Transverse colon (tissue), 4 donors: ENCODE measurements at regions of chr2 and their contacts with region 1.

Region 1: DNA sequence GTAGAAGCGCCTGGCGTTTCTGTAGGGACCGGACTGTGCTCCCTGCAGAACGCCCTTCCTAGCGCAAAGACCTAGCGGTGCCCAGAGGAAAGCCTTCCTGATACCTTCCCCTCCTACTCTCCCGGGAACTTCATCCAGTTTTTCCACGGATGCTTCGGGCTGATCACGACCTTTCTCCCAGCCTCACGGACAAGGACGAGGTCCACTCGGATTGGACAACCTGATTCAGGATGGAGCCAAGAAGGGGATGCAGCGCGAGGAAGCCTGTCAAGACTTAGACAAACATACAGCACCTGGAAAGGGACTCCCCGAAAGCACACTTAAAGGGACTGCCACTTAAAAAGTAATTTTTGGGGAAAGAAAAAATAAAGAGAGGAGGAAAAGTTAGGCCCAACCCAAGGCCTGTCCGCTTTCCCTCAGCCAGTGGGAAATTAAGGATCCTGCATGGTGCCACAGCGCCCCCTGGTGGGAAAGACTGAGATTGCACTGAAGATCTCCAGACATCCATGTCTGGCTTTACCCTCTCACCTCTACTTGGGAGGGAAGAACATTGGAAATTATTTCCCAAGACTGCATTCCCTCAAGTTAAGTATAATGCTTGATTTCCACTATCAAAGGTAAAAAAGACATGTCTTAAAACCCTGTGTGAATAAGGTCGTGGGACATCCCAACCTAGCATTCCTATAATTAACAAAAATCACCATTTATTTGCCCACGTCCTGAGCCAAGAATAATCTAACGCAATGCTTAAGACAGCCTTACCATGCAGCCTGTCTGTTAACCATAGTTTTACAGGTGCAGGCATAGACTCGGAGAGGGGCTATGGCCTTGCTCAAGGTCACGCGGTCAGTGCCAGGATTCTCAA is 13.4 kb upstream of the COPS8 start:
- DNase-seq: peak; percentile 79
- H3K4me3 ChIP-seq: no peak overlapping the region
- H3K27ac ChIP-seq: no peak overlapping the region
- H3K4me1 ChIP-seq: no peaks in the 10 kb centered on the region
- H3K27me3 ChIP-seq: no peaks in the 10 kb centered on the region
- CTCF ChIP-seq: peak; percentile 92 to 100 (median 98)
- EP300 ChIP-seq: no peak
- POLR2A ChIP-seq: no peak

Region 2: GRCh38 chr2:235766278-235766677 is 1306.0 kb before region 1 on chr2:
- in situ Hi-C with region 1: loop called in 2 of 4 experiments (anchors 25 kb)
- intact Hi-C with region 1: no loop called
- DNase-seq: peak; percentile 73
- H3K4me3 ChIP-seq: no peak overlapping the region
- H3K27ac ChIP-seq: peak overlapping the region in 1 of 4 donors; percentile 4
- H3K4me1 ChIP-seq: peaks cover 0 to 8% (median 0%) of the 10 kb centered on the region in 4 donors
- H3K27me3 ChIP-seq: no peaks in the 10 kb centered on the region
- CTCF ChIP-seq: peak; percentile 87 to 95 (median 91)
- EP300 ChIP-seq: no peak
- POLR2A ChIP-seq: no peak

Region 3: GRCh38 chr2:236345081-236345714 is 727.1 kb before region 1 on chr2:
- in situ Hi-C with region 1: loop called in 2 of 4 experiments (anchors 5 kb)
- intact Hi-C with region 1: no loop called
- DNase-seq: no peak
- H3K4me3 ChIP-seq: no peak overlapping the region
- H3K27ac ChIP-seq: no peak overlapping the region
- H3K4me1 ChIP-seq: no peaks in the 10 kb centered on the region
- H3K27me3 ChIP-seq: no peaks in the 10 kb centered on the region
- CTCF ChIP-seq: no peak
- EP300 ChIP-seq: no peak
- POLR2A ChIP-seq: no peak

Region 4: DNA sequence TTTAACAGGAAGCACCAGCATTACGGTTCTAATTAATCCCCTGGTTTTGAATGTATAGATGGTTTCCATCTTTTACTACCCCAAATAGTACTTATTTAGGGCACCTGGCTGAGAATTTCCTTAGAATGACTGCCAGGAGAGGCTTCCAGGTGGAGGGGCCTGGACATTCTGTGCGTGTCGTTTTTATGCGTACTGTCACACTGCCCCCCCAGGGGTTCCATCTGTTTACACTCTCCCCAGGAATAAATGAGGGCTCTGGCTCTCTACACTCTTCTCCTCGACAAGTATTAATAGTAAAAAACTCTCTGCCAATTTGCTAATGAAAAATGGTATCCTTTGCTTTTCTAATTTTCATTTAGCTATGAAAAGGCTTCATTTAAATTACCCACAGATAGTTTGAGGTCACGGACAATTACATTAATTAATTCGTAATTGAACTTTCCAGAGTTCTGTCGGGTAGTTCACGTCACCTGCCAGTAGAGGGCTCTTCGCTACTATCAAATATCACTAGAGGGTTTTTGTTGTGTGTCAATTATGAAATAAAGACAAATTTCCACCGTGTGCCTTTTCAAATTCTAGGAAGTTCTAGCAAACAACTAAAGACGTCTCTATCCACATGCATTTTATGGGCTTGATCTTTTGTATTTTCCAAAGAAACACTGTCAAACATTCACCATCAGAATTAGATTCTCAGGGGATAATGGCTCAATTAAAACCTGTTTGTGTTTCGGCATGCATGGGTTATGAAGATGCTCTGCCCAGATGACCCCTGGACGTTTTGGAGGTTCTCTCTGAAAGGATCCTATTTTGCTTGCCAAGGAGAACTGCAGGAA is 719.3 kb before region 1 on chr2:
- in situ Hi-C with region 1: loop called in 2 of 4 experiments (anchors 5 kb)
- intact Hi-C with region 1: no loop called
- DNase-seq: no peak
- H3K4me3 ChIP-seq: no peak overlapping the region
- H3K27ac ChIP-seq: no peak overlapping the region
- H3K4me1 ChIP-seq: no peaks in the 10 kb centered on the region
- H3K27me3 ChIP-seq: no peaks in the 10 kb centered on the region
- CTCF ChIP-seq: peak; percentile 69 to 92 (median 81)
- EP300 ChIP-seq: no peak
- POLR2A ChIP-seq: no peak

Region 5: GRCh38 chr2:236369661-236370062 is 702.6 kb before region 1 on chr2:
- in situ Hi-C with region 1: loop called in 1 of 4 experiments (anchors 10 kb)
- intact Hi-C with region 1: no loop called
- DNase-seq: no peak
- H3K4me3 ChIP-seq: no peak overlapping the region
- H3K27ac ChIP-seq: no peak overlapping the region
- H3K4me1 ChIP-seq: peaks cover 0 to 2% (median 0%) of the 10 kb centered on the region in 4 donors
- H3K27me3 ChIP-seq: peaks cover 13% of the 10 kb centered on the region
- CTCF ChIP-seq: no peak
- EP300 ChIP-seq: no peak
- POLR2A ChIP-seq: no peak

Region 6: DNA sequence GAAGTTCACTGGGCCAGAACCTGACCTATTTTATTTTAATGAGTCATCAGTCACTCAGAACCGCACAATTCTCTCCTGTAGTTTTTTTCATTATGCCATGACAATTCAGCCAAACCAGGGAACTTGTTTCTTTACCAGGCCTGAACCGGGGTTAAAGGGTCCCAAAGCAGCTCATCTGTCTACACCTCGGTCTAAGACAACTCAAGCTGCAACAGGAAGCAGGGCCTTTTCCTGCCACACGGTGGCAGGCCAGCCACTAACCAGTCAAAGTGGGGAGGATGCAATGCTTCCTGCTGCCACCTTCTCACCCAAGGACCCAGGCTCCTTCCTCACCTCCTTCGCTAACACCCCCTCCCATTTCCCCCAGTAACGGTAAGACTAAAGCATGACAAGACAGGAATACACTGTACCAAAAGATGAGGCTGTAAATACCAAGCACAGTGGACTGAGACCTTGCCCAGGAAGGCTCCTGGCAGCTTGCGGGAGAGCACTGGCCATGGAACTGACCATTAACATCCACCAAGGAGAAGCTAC is 559.3 kb before region 1 on chr2:
- in situ Hi-C with region 1: loop called in 2 of 4 experiments (anchors 25 kb)
- intact Hi-C with region 1: no loop called
- DNase-seq: peak; percentile 58
- H3K4me3 ChIP-seq: no peak overlapping the region
- H3K27ac ChIP-seq: no peak overlapping the region
- H3K4me1 ChIP-seq: peaks cover 0 to 12% (median 0%) of the 10 kb centered on the region in 4 donors
- H3K27me3 ChIP-seq: peaks cover 7% of the 10 kb centered on the region
- CTCF ChIP-seq: peak; percentile 77 to 86 (median 80)
- EP300 ChIP-seq: no peak
- POLR2A ChIP-seq: no peak

Region 7: DNA sequence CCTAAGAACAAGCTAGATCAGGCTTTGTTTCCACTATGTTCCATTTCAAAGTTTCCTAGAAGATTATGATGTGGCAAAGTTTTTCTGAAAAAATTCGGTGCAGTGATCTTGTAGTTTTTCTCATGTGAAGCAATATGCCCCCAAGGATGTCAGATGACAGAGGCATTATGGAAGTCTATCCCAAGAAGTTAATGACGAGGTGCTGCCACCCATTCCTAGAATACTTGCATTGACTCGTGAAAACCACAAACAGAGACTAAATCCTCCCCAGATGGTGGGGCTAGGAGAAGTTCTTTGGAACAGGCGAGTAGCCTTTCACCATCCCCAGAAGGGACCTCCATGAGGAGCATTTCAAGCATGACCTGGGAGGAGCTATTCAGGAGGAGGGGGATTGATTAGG is 26.9 kb before region 1 on chr2:
- in situ Hi-C with region 1: no loop called
- intact Hi-C with region 1: no loop called
- DNase-seq: no peak
- H3K4me3 ChIP-seq: no peak overlapping the region
- H3K27ac ChIP-seq: no peak overlapping the region
- H3K4me1 ChIP-seq: no peaks in the 10 kb centered on the region
- H3K27me3 ChIP-seq: no peaks in the 10 kb centered on the region
- CTCF ChIP-seq: no peak
- EP300 ChIP-seq: no peak
- POLR2A ChIP-seq: no peak